GM10248 (cell line): ENCODE measurements at regions of chr13 and their contacts with region 1.

Region 1: DNA sequence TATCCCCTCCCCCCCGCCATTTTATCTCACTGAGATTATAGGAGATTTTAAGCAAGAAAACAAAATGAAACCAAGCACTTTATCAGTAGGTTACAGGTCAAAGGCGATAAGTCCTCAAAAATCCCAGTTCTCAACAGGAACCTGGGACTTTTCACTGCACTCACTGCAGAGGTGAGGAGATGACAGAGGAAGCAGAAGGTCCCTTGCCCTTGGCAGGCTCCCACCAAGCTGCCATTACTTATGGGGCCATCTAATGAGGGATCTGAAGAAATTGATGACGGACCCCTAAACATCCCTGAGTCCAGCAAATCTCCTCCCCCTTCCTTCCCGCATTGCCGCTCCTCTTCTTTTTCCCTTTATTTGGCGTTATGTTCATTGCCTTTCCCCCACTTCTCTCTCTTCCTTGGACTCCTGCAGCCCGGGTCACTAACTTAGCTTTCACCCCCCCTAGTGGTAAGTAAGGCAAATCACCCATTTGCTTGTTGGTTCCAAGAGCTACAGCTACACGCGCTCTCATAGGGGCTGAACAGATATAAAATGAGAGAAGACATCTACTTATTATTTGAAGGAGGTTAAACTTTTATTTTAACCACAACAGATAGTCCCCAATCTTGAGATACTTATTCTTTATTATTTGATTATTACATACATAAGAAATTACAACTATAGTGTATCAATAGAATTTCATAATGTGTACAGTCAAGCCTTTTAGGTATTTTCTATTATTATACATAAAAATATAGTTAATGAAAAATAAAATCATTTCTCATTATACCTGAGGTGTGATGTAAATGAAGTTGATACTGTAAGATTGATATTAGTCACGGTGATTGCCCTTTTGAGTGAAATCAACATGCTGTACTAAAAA is 52.0 kb upstream of the ARGLU1 start:
- DNase-seq: peak; percentile 57
- CTCF ChIP-seq: peak; percentile 77

Region 2: DNA sequence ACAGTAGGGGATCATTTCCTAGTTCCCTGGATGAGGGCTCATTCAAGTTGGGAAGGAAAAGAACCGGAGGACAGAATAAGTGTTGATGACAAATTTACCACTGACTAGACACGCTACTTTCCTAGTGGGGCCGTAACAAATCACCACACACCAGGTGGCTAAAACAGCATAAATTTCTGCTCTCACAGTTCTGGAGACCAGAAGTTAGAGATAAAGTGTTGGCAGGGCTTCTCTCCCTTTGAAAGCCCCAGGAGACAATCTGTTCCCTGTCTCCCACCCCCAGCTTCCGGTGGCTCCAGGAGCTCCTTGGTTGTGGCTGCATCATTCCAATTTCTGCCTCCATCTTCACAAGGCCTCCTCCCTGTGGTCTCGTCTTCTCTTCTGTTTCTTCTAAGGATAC is 13.4 kb after region 1 on chr13:
- CTCF ChIA-PET with region 1: interaction called, 28 read pairs
- POLR2A ChIA-PET with region 1: no interaction called
- DNase-seq: no peak
- CTCF ChIP-seq: no peak